GM12878 (cell line): ENCODE measurements at regions of chr21 and their contacts with region 1.

Region 1: DNA sequence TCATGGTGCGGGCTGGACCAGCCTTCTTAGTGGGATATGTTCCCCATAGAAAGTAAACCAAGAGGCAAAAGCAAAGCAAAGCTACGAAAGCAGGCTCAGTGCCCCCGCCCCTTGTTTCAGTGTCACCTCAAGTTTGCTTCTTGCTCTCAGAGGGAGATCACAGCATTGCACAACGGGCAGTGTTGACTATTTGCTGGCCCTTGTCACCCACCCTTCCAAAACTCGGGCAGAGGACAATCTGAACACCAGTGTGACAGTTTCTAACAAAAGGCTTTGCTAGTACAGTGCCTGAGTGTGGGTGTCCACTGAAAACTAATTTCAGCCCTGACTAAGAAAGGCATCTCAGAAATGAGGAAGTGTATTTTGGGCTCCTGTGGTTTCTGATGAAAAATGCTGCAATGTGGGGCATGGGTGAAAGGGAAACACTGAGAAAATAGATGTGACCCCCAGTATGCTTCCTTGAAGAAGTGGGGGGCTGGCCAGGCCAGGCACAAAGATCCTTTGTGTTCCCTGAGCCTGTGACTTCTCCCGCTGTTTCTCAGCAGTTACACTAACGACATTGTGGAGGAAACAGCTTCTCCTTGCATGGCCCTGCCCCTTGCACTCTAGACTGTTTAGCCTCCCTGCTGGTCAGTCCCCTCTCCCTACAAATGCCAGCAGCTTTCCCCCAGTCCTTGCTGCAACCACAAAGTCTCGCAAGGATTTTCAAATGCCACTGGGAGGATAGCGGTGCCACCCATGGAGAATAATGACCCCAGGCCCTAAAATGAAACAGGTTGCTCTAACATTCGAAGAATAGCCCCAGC is 33.3 kb upstream of the KCNE1 start:
- DNase-seq: peak; percentile 86
- ATAC-seq: peak; percentile 93
- H3K4me3 ChIP-seq: peak overlapping the region; percentile 44; the same call in 1 of the 2 replicates
- H3K27ac ChIP-seq: peak overlapping the region; percentile 84
- H3K4me1 ChIP-seq: peaks cover 38% of the 10 kb centered on the region
- H3K27me3 ChIP-seq: no peaks in the 10 kb centered on the region
- CTCF ChIP-seq: no peak
- EP300 ChIP-seq: peak; percentile 34 to 87; a peak in 3 of 4 replicates
- POLR2A ChIP-seq: peak; percentile 68; the same call in 1 of the 2 replicates
- RAD21 ChIP-seq: no peak

Region 2: DNA sequence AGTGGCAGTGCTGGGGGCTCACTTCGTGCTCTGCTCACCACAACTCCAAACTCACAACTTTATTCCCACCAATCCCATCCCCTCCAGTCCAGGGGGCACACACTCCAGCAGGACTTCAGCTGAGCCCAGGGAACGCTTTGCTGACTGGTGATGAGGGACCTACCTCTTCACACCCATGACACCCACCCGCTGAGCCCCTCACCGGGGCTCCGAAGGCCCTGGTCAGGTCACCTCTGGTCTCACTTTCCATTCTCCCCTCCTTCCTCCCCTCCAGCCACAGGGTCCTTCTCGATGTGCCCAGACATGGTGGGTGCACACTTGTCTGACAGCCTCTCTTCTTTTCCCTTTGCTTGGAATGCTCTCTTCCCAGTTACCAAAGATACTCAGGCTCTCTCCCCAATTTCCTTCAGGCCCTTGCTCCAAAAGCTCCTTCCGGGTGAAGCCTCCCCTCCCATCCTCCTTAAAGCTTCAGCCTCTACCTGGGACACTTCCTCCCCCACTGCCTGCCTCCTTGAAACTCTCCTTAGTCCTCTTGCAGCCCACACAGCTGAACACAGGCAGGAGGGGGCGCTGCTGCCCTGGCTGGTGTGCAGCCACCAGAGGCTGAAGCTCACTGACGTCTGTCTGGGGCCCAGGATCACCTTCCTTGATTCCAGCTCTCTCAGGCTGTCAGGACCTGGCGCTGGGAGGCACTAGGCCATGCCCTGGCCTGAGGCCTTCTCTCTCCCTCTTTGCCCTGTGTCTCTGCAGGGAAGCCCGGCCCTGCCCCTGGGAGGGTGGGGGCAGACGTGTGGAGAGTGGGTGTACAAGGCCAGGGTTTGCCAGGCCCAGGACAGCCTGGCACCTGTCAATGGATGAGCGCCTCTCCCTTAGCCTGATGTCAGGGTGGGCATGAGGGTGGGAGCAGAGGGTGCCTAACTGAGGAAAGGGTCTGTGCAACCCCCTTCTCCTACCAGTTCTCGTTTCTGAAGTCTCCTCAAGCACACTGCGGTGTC is 34.8 kb before region 1 on chr21:
- CTCF ChIA-PET with region 1: interaction called, 13 read pairs
- POLR2A ChIA-PET with region 1: no interaction called
- RAD21 ChIA-PET with region 1: interaction called, 3 read pairs
- SMC1A ChIA-PET with region 1: interaction called, 3 read pairs
- in situ Hi-C with region 1: no loop called
- intact Hi-C with region 1: no loop called
- DNase-seq: no peak
- ATAC-seq: peak; percentile 99
- H3K4me3 ChIP-seq: no peak overlapping the region
- H3K27ac ChIP-seq: no peak overlapping the region
- H3K4me1 ChIP-seq: no peaks in the 10 kb centered on the region
- H3K27me3 ChIP-seq: no peaks in the 10 kb centered on the region
- CTCF ChIP-seq: peak; percentile 81 to 86 (median 86)
- EP300 ChIP-seq: no peak
- POLR2A ChIP-seq: no peak
- RAD21 ChIP-seq: peak; percentile 98

Region 3: GRCh38 chr21:34526618-34527290 is 18.5 kb before region 1 on chr21:
- CTCF ChIA-PET with region 1: interaction called, 3 read pairs
- POLR2A ChIA-PET with region 1: no interaction called
- RAD21 ChIA-PET with region 1: no interaction called
- SMC1A ChIA-PET with region 1: interaction called, 5 read pairs
- in situ Hi-C with region 1: no loop called
- intact Hi-C with region 1: loop called (anchors 2 kb)
- DNase-seq: no peak
- ATAC-seq: peak; percentile 89
- H3K4me3 ChIP-seq: peak overlapping the region; percentile 57
- H3K27ac ChIP-seq: peak overlapping the region; percentile 78
- H3K4me1 ChIP-seq: peaks cover 14% of the 10 kb centered on the region
- H3K27me3 ChIP-seq: no peaks in the 10 kb centered on the region
- CTCF ChIP-seq: no peak
- EP300 ChIP-seq: no peak
- POLR2A ChIP-seq: no peak
- RAD21 ChIP-seq: no peak

Region 4: DNA sequence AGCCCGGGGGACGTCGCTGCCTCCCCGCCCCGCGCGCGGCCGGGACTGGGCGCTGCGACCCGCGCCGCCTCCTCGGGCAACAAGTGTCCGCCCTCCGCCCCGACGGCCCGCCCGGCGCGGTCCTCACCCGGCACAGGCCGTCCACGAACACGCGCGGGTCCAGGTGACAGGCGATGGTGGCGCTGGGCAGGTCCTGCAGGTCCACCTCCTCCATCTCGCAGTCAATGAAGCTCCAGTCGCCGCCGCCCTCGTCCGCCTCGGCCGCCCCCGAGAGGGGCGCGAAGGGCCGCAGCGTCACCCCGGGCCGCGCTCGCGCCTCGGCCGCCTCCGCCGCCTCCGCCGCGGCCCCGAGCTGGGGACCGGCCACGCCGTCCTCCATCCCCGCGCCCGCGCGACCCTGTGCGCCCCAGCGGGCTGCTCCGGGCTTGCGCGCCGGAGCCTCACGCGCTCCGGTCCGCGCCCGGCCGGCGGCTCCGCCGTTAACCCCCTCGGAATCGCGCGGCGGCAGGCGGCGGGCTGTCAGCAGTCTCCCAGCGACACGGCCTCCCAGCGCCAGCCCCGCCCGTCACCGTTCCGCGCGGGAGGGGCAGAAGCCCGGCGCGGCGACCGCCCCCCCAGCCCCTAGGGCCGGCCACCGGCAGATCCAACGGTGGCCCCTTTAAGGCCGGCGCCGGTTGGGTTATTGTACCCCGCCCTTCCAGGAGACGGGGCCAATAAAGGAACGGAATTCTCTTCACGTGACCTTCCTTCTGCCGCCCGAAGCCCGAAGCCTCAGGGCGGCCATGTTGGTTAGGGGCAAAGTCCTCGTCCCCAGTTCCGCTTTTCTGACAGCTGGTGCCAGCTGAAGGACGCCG is 69.6 kb after region 1 on chr21 and contains the start of gene RCAN1:
- CTCF ChIA-PET with region 1: no interaction called
- POLR2A ChIA-PET with region 1: no interaction called
- RAD21 ChIA-PET with region 1: no interaction called
- SMC1A ChIA-PET with region 1: no interaction called
- in situ Hi-C with region 1: no loop called
- intact Hi-C with region 1: loop called (anchors 2 kb)
- DNase-seq: peak; percentile 75
- ATAC-seq: peak; percentile 98
- H3K4me3 ChIP-seq: peak within 1 kb of the TSS; percentile 81
- H3K27ac ChIP-seq: no peak within 1 kb of the TSS
- H3K4me1 ChIP-seq: peaks cover 6% of the 10 kb centered on the region
- H3K27me3 ChIP-seq: no peaks in the 10 kb centered on the region
- CTCF ChIP-seq: no peak
- EP300 ChIP-seq: no peak
- POLR2A ChIP-seq: 0 out of 2 replicates have a peak, but pooled peaks have one; percentile 1
- RAD21 ChIP-seq: no peak
- polyA plus RNA-seq, gene RCAN1: 5.1 to 8.8 TPM